GM12878 (cell line): ENCODE measurements at regions of chr3 and their contacts with region 1.

Region 1: DNA sequence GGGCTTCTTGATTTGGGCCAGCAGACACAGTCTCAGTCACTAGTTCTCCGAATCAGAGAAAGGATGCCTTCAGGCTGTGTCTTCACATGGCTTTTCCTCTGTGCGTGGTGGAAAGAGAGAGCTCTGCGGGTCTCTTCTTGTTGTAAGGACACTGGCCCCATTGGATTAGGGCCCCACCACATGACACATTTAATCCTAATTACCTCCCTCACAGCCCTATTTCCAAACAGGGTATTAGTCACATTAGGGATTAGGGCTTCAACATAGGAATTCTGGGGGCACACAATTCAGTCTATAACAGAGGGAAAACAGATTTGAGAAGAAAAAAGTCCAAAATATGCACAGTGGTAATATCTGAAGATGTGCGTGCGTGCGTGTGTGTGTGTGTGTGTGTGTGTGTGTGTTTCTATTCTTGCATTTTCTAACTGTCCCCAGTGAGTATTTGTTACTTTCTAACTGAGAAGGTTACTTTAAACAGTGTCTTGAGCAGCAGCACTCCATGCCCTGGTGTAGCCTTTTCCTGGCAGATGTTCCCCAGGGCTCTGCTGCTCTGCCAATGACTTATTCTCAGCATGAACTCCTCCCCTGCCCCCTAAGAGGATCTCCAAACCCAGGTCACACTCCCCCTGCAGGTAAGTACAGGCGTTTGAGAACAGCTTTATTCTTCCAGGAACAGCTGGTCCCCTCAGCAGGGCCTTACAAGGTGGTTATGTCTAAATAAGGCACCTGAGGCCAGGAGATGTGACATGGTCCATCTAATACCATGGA is 72.9 kb downstream of the RPL39L start:
- DNase-seq: no peak
- ATAC-seq: peak; percentile 67
- H3K4me3 ChIP-seq: no peak overlapping the region
- H3K27ac ChIP-seq: peak overlapping the region; percentile 82
- H3K4me1 ChIP-seq: peaks cover 41% of the 10 kb centered on the region
- H3K27me3 ChIP-seq: no peaks in the 10 kb centered on the region
- CTCF ChIP-seq: peak; percentile 34 to 71 (median 48); a peak in 5 of 6 replicates
- EP300 ChIP-seq: no peak
- POLR2A ChIP-seq: peak; percentile 22; the same call in 1 of the 2 replicates
- RAD21 ChIP-seq: peak; percentile 71

Region 2: DNA sequence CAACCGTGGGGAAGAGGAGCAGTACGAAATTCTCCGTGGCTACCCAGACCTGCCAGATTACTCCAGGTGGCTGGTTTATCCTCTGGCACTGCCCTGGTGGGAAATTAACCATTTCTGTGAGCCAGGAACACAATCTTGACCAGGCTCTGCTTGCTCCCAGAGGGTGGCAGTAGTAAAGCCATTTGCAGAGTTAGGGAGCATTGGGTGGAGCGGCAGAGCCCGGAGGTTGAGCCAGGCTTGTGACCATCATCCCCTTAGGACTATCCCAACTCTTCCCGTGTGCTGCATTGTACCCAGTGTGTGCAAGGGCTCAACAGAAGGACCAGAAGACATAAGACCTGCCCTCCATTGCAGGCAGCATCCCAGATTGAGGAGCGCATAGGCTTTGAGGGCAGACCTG is 344.0 kb before region 1 on chr3:
- CTCF ChIA-PET with region 1: no interaction called
- POLR2A ChIA-PET with region 1: no interaction called
- RAD21 ChIA-PET with region 1: no interaction called
- SMC1A ChIA-PET with region 1: no interaction called
- in situ Hi-C with region 1: no loop called
- intact Hi-C with region 1: no loop called
- DNase-seq: no peak
- ATAC-seq: no peak
- H3K4me3 ChIP-seq: no peak overlapping the region
- H3K27ac ChIP-seq: no peak overlapping the region
- H3K4me1 ChIP-seq: no peaks in the 10 kb centered on the region
- H3K27me3 ChIP-seq: no peaks in the 10 kb centered on the region; a peak in 1 of 4 replicates
- CTCF ChIP-seq: 0 out of 6 replicates have a peak, but pooled peaks of 1 of the 3 experiments have one; percentile 5
- EP300 ChIP-seq: no peak
- POLR2A ChIP-seq: no peak
- RAD21 ChIP-seq: no peak

Region 3: GRCh38 chr3:186960347-186960746 is 106.1 kb before region 1 on chr3:
- CTCF ChIA-PET with region 1: no interaction called
- POLR2A ChIA-PET with region 1: no interaction called
- RAD21 ChIA-PET with region 1: no interaction called
- SMC1A ChIA-PET with region 1: no interaction called
- in situ Hi-C with region 1: no loop called
- intact Hi-C with region 1: no loop called
- DNase-seq: no peak
- ATAC-seq: no peak
- H3K4me3 ChIP-seq: no peak overlapping the region
- H3K27ac ChIP-seq: peak overlapping the region; percentile 37; the same call in 1 of the 2 replicates
- H3K4me1 ChIP-seq: peaks cover 28% of the 10 kb centered on the region
- H3K27me3 ChIP-seq: no peaks in the 10 kb centered on the region
- CTCF ChIP-seq: no peak
- EP300 ChIP-seq: no peak
- POLR2A ChIP-seq: no peak
- RAD21 ChIP-seq: no peak

Region 4: DNA sequence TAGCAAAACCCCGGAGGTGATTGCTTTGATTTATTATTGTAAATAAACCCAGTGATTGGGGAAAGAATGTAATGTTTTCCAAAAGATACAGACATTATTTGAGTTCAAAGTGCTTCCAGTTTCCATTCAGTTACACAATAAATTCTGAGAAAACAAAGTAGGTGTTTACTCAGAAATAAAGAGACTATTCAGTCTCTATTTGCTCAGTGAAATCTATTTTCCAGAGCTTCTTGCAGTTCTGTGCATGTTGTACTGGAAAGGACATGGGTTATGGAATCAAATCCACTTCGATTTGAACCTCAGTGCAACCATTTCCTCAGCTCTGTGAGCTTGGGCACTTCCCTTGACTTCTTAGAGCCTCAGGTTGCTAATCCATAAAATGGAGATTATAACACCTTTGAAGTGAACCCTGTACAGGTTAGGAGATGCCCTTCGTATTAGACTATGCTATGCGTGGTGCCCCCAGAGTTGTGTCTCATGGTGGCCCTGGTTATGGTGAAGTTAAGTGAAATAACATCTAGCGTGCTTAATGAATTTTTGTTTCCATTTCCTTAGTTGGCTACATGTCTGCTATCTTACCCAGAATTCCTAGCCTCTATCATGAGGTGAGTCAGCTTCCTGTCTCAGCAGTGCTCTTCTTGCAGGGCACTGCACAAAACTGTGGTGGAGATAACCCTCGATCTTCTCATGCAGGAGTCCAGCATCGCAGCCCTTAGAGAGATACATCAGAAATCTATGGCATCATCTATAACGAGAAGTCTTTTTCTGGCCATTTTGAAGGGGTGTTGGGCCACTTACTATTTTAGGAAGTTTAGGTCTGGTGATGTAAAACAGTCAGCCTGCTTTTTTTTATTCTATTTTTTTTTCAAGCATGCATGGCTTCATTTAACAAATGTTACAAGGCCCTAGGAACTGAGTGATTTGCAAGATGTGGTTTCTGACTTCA is 24.8 kb before region 1 on chr3:
- CTCF ChIA-PET with region 1: interaction called, 22 read pairs
- POLR2A ChIA-PET with region 1: interaction called, 6 read pairs
- RAD21 ChIA-PET with region 1: interaction called, 15 read pairs
- SMC1A ChIA-PET with region 1: interaction called, 16 read pairs
- in situ Hi-C with region 1: no loop called
- intact Hi-C with region 1: no loop called
- DNase-seq: no peak
- ATAC-seq: peak; percentile 51
- H3K4me3 ChIP-seq: no peak overlapping the region; the same call in 1 of the 2 replicates
- H3K27ac ChIP-seq: peak overlapping the region; percentile 90
- H3K4me1 ChIP-seq: peaks cover 59% of the 10 kb centered on the region
- H3K27me3 ChIP-seq: no peaks in the 10 kb centered on the region
- CTCF ChIP-seq: no peak
- EP300 ChIP-seq: no peak
- POLR2A ChIP-seq: no peak
- RAD21 ChIP-seq: peak; percentile 1; the same call in 1 of the 2 replicates